Vagina (tissue), 2 donors: ENCODE measurements at regions of chr12 and their contacts with region 1.

Region 1: DNA sequence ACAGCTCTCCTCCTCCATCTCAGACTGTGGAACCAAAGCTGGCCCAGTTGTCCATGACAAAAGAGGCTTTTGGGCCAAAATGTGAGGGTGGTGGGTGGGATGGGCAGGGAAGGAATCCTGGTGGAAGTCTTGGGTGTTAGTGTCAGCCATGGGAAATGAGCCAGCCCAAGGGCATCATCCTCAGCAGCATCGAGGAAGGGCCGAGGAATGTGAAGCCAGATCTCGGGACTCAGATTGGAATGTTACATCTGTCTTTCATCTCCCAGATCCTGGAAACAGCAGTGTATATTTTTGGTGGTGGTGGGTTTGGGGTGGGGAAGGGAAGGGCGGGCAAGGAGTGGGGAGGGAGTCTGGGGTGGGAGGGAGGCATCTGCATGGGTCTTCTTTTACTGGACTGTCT is 11.8 kb upstream of the TAMALIN start:
- DNase-seq: no peak
- H3K4me3 ChIP-seq: no peak overlapping the region
- H3K27ac ChIP-seq: no peak overlapping the region
- H3K4me1 ChIP-seq: no peaks in the 10 kb centered on the region
- H3K27me3 ChIP-seq: no peaks in the 10 kb centered on the region
- CTCF ChIP-seq: no peak
- POLR2A ChIP-seq: no peak

Region 2: GRCh38 chr12:51970904-51971646 is 23.9 kb before region 1 on chr12:
- intact Hi-C with region 1: loop called (anchors 1 kb)
- DNase-seq: no peak
- H3K4me3 ChIP-seq: no peak overlapping the region
- H3K27ac ChIP-seq: peak overlapping the region; percentile 12
- H3K4me1 ChIP-seq: peaks cover 56% of the 10 kb centered on the region
- H3K27me3 ChIP-seq: no peaks in the 10 kb centered on the region
- CTCF ChIP-seq: peak in 1 of 3 experiments; percentile 41
- POLR2A ChIP-seq: no peak

Region 3: GRCh38 chr12:52041695-52042123 is 46.8 kb after region 1 on chr12:
- intact Hi-C with region 1: no loop called
- DNase-seq: no peak
- H3K4me3 ChIP-seq: no peak overlapping the region
- H3K27ac ChIP-seq: peak overlapping the region; percentile 96
- H3K4me1 ChIP-seq: peaks cover 71% of the 10 kb centered on the region
- H3K27me3 ChIP-seq: no peaks in the 10 kb centered on the region
- CTCF ChIP-seq: no peak
- POLR2A ChIP-seq: no peak